ENCODE measurements at regions of chr12 and their contacts with region 1.

Region 1: DNA sequence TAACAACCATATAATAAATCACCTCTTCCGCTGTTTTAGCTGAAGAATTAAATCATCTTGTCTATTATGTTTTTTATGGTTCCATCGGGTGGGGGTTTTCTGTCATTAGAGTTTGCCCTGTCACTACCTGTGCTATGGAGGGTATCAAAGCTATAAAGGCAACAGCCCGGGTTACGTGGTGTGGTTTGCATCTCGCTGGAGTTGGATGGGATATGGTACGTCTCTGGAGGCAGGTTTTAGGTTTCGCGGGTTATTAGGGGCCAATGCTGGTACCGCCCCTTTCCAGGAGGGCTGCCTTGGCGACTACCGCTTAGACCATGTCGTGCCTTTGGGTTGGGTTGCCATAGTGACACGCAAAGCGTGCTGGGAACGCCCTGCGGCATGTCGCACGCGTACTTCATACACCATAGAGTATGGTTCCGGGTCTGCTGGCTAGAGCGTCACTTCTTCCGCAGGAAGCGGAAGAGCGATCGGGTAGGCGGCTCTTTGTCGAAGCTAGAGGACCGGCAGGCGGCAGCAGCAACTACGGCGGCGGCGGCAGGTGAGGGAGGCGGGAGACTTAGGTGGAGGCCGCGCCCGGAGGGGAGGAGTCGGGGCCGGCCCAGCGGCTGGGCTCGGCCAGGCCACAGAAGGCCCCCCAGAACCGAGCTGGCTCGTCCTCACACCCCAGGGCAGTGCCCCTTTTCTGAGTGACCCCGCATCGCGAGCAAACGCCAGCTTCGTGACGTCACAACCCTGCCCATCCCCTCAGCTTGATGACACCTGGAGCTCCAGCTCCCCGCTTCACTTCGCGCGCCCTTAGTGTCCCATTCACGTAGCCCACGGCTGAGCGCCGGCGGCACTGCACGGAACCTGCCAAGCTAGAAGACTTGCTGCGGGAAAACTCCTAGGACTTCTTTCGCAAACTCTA is at the start of gene ZC3H10:
- DNase-seq: peak; percentile 98 to 99
- H3K4me3 ChIP-seq: peak within 1 kb of the TSS; percentile 70
- H3K4me3 Mint-ChIP-seq: peak within 1 kb of the TSS; percentile 97
- H3K27ac Mint-ChIP-seq: peak within 1 kb of the TSS; percentile 100
- H3K4me1 ChIP-seq: peaks cover 18% of the 10 kb centered on the region
- H3K4me1 Mint-ChIP-seq: peaks cover 20% of the 10 kb centered on the region
- H3K27me3 ChIP-seq: no peaks in the 10 kb centered on the region
- H3K27me3 Mint-ChIP-seq: peaks cover 2% of the 10 kb centered on the region
- CTCF ChIP-seq: peak in 1 of 2 experiments; percentile 53
- total RNA-seq, gene ZC3H10: 3.5 and 4.4 TPM in 2 replicates

Region 2: DNA sequence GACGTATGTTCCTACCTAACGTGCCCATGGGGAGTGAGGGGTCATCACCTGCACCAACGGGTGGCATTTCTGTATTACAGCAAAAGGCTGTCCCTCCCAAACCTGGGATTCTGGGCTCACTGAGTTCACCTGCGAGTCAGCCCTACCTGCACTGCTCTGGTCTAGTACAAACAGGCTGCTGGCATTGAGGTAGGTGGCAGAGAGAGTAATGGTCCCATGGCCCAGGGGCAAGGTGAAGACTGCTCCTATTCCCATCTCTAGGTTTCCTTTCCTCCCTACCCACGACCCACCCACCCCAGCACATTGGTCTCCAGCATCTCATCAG is 120.5 kb before region 1 on chr12:
- CTCF ChIA-PET with region 1: no interaction called
- POLR2A ChIA-PET with region 1: no interaction called
- intact Hi-C with region 1: no loop called
- DNase-seq: no peak
- H3K4me3 ChIP-seq: peak overlapping the region; percentile 58
- H3K4me3 Mint-ChIP-seq: peak overlapping the region; percentile 98
- H3K27ac Mint-ChIP-seq: peak overlapping the region; percentile 87
- H3K4me1 ChIP-seq: peaks cover 15% of the 10 kb centered on the region
- H3K4me1 Mint-ChIP-seq: peaks cover 20% of the 10 kb centered on the region
- H3K27me3 ChIP-seq: no peaks in the 10 kb centered on the region
- H3K27me3 Mint-ChIP-seq: no peaks in the 10 kb centered on the region
- CTCF ChIP-seq: no peak

Region 3: DNA sequence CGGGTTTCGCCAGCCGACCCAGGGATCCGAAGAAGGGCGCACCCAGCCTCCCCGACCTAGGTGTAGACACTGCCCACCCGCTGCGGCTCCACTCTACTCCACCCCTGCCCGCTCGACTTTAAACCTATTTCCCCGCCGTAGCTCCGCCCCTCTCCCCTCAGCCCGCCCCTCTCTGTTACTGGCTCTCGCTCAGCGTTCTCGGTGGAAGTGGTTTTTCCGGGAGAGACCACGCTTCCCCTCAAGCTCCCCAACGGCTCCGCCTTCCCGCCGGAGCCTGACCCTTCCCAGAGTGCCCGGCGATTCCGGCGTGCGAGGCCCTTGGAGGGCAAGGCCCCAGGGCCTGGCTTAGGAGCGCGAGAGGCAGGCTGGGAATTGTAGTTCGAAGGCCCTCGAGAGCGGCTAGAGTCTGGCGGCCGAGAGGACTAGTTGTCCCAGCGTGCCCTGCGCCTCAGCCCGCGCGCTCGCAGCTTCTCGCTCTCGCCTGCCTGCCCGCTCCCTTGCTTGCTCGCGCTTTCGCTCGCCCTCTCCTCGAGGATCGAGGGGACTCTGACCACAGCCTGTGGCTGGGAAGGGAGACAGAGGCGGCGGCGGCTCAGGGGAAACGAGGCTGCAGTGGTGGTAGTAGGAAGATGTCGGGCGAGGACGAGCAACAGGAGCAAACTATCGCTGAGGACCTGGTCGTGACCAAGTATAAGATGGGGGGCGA is 13.8 kb before region 1 on chr12 and contains the start of gene PA2G4:
- CTCF ChIA-PET with region 1: interaction called, 24 read pairs
- POLR2A ChIA-PET with region 1: interaction called, 22 read pairs
- intact Hi-C with region 1: loop called (anchors 1 kb)
- DNase-seq: peak; percentile 99
- H3K4me3 ChIP-seq: peak within 1 kb of the TSS; percentile 68
- H3K4me3 Mint-ChIP-seq: peak within 1 kb of the TSS; percentile 98
- H3K27ac Mint-ChIP-seq: peak within 1 kb of the TSS; percentile 99
- H3K4me1 ChIP-seq: peaks cover 22% of the 10 kb centered on the region
- H3K4me1 Mint-ChIP-seq: peaks cover 9% of the 10 kb centered on the region
- H3K27me3 ChIP-seq: no peaks in the 10 kb centered on the region; the same call in 1 of the 2 replicates
- H3K27me3 Mint-ChIP-seq: no peaks in the 10 kb centered on the region
- CTCF ChIP-seq: no peak
- total RNA-seq, gene PA2G4: 178 and 190 TPM in 2 replicates

Region 4: DNA sequence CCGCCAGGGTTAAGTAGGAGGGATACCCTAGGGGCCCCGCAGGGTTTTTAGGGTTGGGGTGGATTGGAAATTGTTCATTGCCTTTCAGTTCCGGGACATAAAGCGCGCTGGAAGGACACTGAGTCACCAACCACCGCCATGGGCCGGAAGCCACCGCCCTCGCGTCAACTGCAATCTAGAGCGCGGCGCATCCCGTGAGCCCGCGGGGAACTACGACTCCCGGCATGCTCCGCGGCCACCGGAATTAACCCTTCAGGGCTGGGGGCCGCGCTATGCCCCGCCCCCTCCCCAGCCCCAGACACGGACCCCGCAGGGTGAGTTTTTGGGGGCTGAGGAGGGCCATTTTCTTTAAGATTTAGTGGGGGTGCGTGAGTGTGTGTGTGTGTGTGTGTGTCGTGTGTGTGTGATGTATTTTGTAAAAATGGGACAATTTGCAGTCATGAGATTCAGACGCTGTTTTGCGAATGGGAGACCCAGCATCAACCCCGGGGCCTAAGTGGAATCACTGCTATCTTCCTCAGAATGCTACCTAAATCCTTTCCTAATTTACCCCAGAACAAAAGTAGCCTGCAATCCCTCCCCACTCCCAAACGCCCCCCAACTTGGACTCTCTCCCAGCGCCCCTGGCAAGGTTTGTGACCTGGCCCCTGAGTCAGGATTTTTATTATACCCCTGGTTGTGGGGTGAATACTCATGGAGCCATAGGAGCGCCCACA is 34.4 kb after region 1 on chr12 and contains the start of gene MYL6B:
- CTCF ChIA-PET with region 1: interaction called, 10 read pairs
- POLR2A ChIA-PET with region 1: interaction called, 9 read pairs
- intact Hi-C with region 1: loop called (anchors 1 kb)
- DNase-seq: peak; percentile 88 to 92
- H3K4me3 ChIP-seq: peak within 1 kb of the TSS; percentile 73
- H3K4me3 Mint-ChIP-seq: peak within 1 kb of the TSS; percentile 87
- H3K27ac Mint-ChIP-seq: peak within 1 kb of the TSS; percentile 98
- H3K4me1 ChIP-seq: peaks cover 12% of the 10 kb centered on the region
- H3K4me1 Mint-ChIP-seq: peaks cover 20% of the 10 kb centered on the region
- H3K27me3 ChIP-seq: no peaks in the 10 kb centered on the region
- H3K27me3 Mint-ChIP-seq: no peaks in the 10 kb centered on the region
- CTCF ChIP-seq: no peak
- total RNA-seq, gene MYL6B: 40.5 and 44.8 TPM in 2 replicates

Region 5: GRCh38 chr12:56224102-56224701 is 106.2 kb after region 1 on chr12 and contains the start of gene NABP2:
- CTCF ChIA-PET with region 1: interaction called, 14 read pairs
- POLR2A ChIA-PET with region 1: interaction called, 9 read pairs
- intact Hi-C with region 1: loop called (anchors 1 kb)
- DNase-seq: peak; percentile 98
- H3K4me3 ChIP-seq: peak within 1 kb of the TSS; percentile 72
- H3K4me3 Mint-ChIP-seq: peak within 1 kb of the TSS; percentile 99
- H3K27ac Mint-ChIP-seq: peak within 1 kb of the TSS; percentile 98
- H3K4me1 ChIP-seq: peaks cover 6% of the 10 kb centered on the region
- H3K4me1 Mint-ChIP-seq: peaks cover under 1% of the 10 kb centered on the region
- H3K27me3 ChIP-seq: no peaks in the 10 kb centered on the region
- H3K27me3 Mint-ChIP-seq: no peaks in the 10 kb centered on the region
- CTCF ChIP-seq: peak; percentile 82 to 89
- total RNA-seq, gene NABP2: 32.1 and 37.7 TPM in 2 replicates

Region 6: DNA sequence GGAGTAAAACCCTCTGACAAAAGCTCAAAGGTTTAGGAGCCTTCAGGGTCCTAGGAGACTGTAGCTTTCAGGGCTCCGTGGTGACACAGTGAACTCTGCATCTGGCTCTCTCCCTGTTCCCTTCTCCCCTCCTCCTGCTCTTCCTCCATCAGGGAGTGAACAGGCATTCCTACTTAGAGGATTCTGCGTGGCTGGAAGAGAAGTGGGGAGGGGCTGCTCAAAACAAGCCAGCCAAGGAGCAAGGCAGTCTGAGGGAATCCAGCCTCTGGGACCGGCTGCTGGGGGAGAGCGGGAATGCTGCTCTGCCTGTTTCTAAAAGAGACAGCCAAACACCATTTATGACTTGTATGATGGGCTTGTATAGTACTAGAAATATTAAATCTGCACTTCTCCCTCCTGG is 453.1 kb after region 1 on chr12:
- CTCF ChIA-PET with region 1: interaction called, 12 read pairs
- POLR2A ChIA-PET with region 1: interaction called, 4 read pairs
- intact Hi-C with region 1: no loop called
- DNase-seq: peak; percentile 34 to 43
- H3K4me3 ChIP-seq: no peak overlapping the region
- H3K4me3 Mint-ChIP-seq: no peak overlapping the region
- H3K27ac Mint-ChIP-seq: no peak overlapping the region
- H3K4me1 ChIP-seq: no peaks in the 10 kb centered on the region
- H3K4me1 Mint-ChIP-seq: peaks cover 16% of the 10 kb centered on the region
- H3K27me3 ChIP-seq: no peaks in the 10 kb centered on the region
- H3K27me3 Mint-ChIP-seq: no peaks in the 10 kb centered on the region
- CTCF ChIP-seq: no peak

Measured in Caco-2 (cell line).